RWPE1 (cell line): ENCODE measurements at regions of chr9 and their contacts with region 1.

Region 1: DNA sequence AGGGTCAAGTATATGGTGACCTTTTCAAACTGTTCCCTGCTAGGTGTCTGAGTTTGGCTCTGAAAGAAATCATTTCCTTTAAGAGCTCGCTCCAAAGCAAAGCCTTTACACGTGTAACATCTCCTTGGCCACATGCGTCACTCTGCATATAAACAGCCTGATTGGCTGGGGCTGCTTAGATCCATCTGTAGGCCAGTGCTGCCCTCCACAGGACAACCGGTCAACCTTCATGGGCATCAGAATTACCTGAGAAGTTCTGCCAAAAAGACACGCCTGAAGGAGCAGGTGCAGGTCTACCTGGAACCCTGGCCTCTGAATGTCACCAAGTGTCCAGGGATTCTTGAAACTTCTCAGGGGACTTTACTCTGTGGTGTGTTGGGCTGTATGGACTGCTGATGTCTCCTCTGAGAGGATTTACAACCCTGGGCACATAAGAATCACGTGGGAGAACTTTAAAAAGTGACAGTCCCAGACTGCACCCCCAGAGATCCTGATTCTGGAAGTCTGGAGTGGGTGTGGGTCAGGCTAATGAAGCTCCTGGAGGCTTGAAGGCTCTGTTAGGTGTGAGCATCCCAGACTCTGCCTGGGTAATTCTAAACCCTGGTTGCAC is 497.6 kb downstream of the GADD45G start:
- DNase-seq: peak; percentile 96
- H3K27ac ChIP-seq: no peak overlapping the region
- CTCF ChIP-seq: peak; percentile 69

Region 2: GRCh38 chr9:89597711-89598625 is 504.4 kb before region 1 on chr9:
- CTCF ChIA-PET with region 1: interaction called, 116 read pairs
- POLR2A ChIA-PET with region 1: no interaction called
- DNase-seq: peak; percentile 59
- H3K27ac ChIP-seq: no peak overlapping the region
- CTCF ChIP-seq: peak; percentile 80

Region 3: GRCh38 chr9:89952401-89952800 is 150.0 kb before region 1 on chr9:
- CTCF ChIA-PET with region 1: no interaction called
- POLR2A ChIA-PET with region 1: no interaction called
- DNase-seq: peak; percentile 49
- H3K27ac ChIP-seq: no peak overlapping the region
- CTCF ChIP-seq: no peak